Activated naive CD8-positive, alpha-beta T cell treated with anti-CD3 and anti-CD28 coated beads, Interleukin-2, amount 10 ng/mL, durations not matched to agents 7 days and 5 days (primary cell): ENCODE measurements at regions of chr4 and their contacts with region 1.

Region 1: GRCh38 chr4:70901984-70902576 is at the start of gene MOB1B:
- DNase-seq: peak; percentile 83
- ATAC-seq: peak; percentile 96
- H3K4me3 Mint-ChIP-seq: peak within 1 kb of the TSS; percentile 100
- H3K27ac Mint-ChIP-seq: peak within 1 kb of the TSS; percentile 95
- H3K4me1 Mint-ChIP-seq: peaks cover 19% of the 10 kb centered on the region
- H3K27me3 Mint-ChIP-seq: no peaks in the 10 kb centered on the region
- total RNA-seq, gene MOB1B: 13.3 to 14.0 TPM

Region 2: DNA sequence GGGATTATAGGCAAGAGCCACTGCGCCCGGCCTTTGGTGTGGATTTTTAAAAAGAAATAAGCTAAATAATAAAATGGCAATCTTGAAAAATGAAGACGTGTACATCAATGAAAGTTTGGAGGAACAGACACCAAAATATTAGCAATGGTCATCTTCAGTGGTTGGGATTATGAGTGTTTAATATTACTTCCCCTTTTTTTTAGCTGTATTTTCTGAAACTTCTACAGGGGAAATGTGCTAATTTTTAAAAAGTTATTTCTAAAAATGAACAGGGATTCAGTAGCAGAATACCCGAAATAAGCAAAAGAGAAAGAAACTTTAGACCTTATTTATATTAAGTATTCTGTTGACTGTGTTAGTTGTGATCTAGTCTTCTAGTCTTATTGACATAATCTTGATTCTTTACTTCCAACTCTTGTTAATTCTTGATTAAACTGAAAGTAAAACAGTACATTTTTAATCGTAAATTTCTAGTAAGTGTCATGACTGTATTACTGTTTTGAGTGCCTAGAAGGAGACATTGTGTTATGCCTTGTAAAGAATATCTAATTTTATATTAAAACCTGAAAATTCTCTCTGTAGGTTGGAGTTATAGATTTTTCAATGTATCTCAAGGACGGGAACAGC is 129.0 kb before region 1 on chr4:
- POLR2A ChIA-PET with region 1: no interaction called
- DNase-seq: no peak
- ATAC-seq: no peak
- H3K4me3 Mint-ChIP-seq: no peak overlapping the region
- H3K27ac Mint-ChIP-seq: no peak overlapping the region
- H3K4me1 Mint-ChIP-seq: peaks cover 4% of the 10 kb centered on the region
- H3K27me3 Mint-ChIP-seq: no peaks in the 10 kb centered on the region

Region 3: GRCh38 chr4:70839589-70840093 is 62.4 kb before region 1 on chr4 and contains the start of gene GRSF1:
- POLR2A ChIA-PET with region 1: interaction called, 10 read pairs
- DNase-seq: peak; percentile 95
- ATAC-seq: peak; percentile 90
- H3K4me3 Mint-ChIP-seq: peak within 1 kb of the TSS; percentile 97
- H3K27ac Mint-ChIP-seq: peak within 1 kb of the TSS; percentile 94
- H3K4me1 Mint-ChIP-seq: peaks cover 22% of the 10 kb centered on the region
- H3K27me3 Mint-ChIP-seq: no peaks in the 10 kb centered on the region
- total RNA-seq, gene GRSF1: 58.6 to 61.0 TPM

Region 4: GRCh38 chr4:70863099-70863790 is 38.8 kb before region 1 on chr4:
- POLR2A ChIA-PET with region 1: no interaction called
- DNase-seq: no peak
- ATAC-seq: no peak
- H3K4me3 Mint-ChIP-seq: no peak overlapping the region
- H3K27ac Mint-ChIP-seq: no peak overlapping the region
- H3K4me1 Mint-ChIP-seq: peaks cover 1% of the 10 kb centered on the region
- H3K27me3 Mint-ChIP-seq: no peaks in the 10 kb centered on the region